ENCODE measurements at regions of chr1 and their contacts with region 1.

Region 1: DNA sequence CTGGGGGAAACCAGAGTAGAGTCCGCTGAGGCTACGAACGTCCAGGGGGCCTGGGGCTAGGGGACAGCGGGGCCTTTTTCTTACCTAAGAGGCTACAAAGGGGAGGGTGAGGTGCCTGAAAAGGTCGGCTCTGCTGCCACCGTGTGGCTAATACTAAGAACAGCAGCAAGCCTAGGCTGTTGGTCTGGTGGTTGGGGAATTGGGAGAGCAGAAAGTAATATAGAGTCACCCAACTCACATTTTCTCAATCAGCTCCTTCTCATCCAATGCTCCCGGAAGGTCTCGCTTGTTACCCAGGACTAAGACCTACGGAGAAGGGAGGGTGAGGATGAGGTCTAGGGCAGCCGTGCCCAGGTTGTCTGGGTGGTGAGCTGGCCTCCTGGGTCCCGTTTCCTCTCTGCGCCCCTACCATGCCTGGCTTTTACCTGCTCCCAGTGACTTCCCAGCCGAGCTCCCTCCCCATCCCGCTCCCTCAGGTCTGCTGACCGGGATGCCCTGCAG is 9.3 kb downstream of the ARL8A start:
- DNase-seq: peak; percentile 55
- H3K4me3 ChIP-seq: no peak overlapping the region
- H3K27ac ChIP-seq: peak overlapping the region in 3 of 4 donors; percentile 12 to 51 (median 15)
- H3K4me1 ChIP-seq: peaks cover 8 to 26% (median 12%) of the 10 kb centered on the region in 4 donors
- H3K27me3 ChIP-seq: no peaks in the 10 kb centered on the region
- CTCF ChIP-seq: peak; percentile 74 to 90 (median 83)
- EP300 ChIP-seq: no peak
- POLR2A ChIP-seq: no peak

Region 2: GRCh38 chr1:201850053-201850397 is 285.2 kb before region 1 on chr1:
- in situ Hi-C with region 1: loop called in 1 of 4 experiments (anchors 25 kb)
- intact Hi-C with region 1: no loop called
- DNase-seq: no peak
- H3K4me3 ChIP-seq: no peak overlapping the region
- H3K27ac ChIP-seq: peak overlapping the region in 2 of 4 donors; percentile 7 to 32
- H3K4me1 ChIP-seq: no peaks in the 10 kb centered on the region
- H3K27me3 ChIP-seq: no peaks in the 10 kb centered on the region
- CTCF ChIP-seq: no peak
- EP300 ChIP-seq: no peak
- POLR2A ChIP-seq: no peak

Measured in transverse colon (tissue), 4 donors.